Common myeloid progenitor, CD34-positive (primary cell): ENCODE measurements at regions of chr4 and their contacts with region 1.

Region 1: DNA sequence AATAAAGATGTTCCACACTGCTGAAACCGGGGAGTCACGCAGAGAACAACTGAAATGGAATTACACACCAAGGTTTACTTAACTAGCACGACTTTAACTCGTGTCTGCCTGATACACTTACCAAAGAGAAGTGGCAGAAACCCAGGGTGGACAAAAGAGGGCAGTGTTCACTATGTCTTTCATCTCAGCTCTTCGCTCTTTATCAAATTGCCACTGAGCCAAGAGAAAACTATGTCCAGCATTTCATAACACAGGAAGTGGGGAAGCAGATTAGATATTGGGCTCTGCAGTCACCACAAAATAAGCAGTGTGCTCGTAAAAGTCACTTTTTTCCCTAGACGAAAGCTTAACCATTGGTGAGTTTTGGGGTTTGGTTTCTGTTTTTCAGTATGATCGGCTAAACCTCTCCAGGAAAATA is 155.7 kb downstream of the CHIC2 start:
- DNase-seq: peak; percentile 82 to 87 (median 86)
- H3K4me3 ChIP-seq: peak overlapping the region in 5 of 7 experiments; percentile 21 to 73 (median 41)
- H3K27ac ChIP-seq: no peak overlapping the region
- H3K4me1 ChIP-seq: peaks cover 7 to 29% (median 9%) of the 10 kb centered on the region in 4 experiments
- H3K27me3 ChIP-seq: peaks cover 0 to 16% (median 5%) of the 10 kb centered on the region in 5 experiments

Region 2: DNA sequence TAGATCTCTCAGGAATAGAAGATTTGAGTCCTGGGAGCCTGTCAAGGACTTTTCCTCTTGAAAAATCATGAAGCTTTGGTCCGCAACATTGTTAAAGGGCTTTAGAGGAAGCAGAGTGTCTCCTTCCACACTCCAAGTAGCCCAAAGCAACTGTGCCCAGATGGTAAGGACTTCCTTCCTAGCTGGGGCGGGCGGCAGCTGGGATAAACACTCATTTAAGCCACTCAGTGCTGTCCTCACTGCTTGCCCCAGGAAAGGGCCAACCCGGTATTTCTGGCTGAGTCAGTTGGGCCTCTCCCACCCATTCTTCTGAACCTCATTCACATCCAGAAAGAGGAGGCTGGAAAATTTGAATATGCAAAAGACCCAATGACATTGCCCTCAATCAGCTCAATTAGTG is 11.4 kb after region 1 on chr4:
- CTCF ChIA-PET with region 1: interaction called, 21 read pairs
- POLR2A ChIA-PET with region 1: no interaction called
- DNase-seq: peak in 2 of 3 donors; percentile 31 to 41
- H3K4me3 ChIP-seq: no peak overlapping the region
- H3K27ac ChIP-seq: no peak overlapping the region
- H3K4me1 ChIP-seq: peaks cover 0 to 7% (median 2%) of the 10 kb centered on the region in 4 experiments
- H3K27me3 ChIP-seq: peaks cover 0 to 1% (median 0%) of the 10 kb centered on the region in 5 experiments

Region 3: DNA sequence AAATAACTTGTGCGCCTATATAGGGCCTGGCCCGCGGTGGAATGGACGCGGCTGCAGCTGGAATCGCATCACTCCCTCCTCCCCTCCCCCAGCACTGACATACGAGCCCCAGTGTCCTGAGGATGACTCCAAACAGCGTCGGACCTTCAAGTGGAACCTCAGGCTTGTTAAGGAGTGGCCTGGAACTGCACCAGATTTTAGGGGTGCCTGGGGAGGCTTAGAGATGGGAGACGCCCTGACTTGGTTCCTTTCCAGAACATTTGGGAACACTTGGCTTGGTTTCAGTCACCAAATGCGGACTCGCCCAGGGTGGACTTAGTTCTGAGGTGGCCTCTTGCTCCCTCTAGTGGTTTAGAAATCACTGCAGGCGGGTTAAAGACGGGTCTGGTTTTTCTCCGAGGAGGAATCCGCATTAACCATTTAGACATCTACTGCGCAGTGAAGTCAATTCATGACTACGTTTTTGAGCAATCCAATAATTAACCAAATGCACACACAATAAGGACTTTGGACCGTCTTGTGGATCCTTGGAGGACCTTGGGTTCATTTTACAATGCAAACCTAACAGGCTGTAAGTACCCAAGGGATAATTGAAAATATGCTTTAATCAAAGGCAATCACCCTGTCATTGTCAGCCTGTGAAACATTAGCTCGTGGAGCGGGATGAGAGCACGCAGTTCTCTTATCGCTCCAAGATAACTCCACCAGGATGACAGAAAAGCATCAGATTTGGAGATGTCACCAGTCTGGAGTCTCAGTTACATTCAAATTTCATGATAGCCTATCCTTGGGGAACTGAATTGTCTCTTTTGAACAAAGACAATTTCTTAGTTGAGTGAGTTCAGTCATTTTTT is 309.2 kb after region 1 on chr4:
- CTCF ChIA-PET with region 1: interaction called, 66 read pairs
- POLR2A ChIA-PET with region 1: no interaction called
- DNase-seq: peak; percentile 75 to 85 (median 78)
- H3K4me3 ChIP-seq: peak overlapping the region; percentile 31 to 74 (median 55)
- H3K27ac ChIP-seq: no peak overlapping the region
- H3K4me1 ChIP-seq: peaks cover 0 to 7% (median 6%) of the 10 kb centered on the region in 4 experiments
- H3K27me3 ChIP-seq: peaks cover 6 to 23% (median 8%) of the 10 kb centered on the region in 5 experiments